ENCODE measurements at regions of chr17 and their contacts with region 1.

Region 1: DNA sequence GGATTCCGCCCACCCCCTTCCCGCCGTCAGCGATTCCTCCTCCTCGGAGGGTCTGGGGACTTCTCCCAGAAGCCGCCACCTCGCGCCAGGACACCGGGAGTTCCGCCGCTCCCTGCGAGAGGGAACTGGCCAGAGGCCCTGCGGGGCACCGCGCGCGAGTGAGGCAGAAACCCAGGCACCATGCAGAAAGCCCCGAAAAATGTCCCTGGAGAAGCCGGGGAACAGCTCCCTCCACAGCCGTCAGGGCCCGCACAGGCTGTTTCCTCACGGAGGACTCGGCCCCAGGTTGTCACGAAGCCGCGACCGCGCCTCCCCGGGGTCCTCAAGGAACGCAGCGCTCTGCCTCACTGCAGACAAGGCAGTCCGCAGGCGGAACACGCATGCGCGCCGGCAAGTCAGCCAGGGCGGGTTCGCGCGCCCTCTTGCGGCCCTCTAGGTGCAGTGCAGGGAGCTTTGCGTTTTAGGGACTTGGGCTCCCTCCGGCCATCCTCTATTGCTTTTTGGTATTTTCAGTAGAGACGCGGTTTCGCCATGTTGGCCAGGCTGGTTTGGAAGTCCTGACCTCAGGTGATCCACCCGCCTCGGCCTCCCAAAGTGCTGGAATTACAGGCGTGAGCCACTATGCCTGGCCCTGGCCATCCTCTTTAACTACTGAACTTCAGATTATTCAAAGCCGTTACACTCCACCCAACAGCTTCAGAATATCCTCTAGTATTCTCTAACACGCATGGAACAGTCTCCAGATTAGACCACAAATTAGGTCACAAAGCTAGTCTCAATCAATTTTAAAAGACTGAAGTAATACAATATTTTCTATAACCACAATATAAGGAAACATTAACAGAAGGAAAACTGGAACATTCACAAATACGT is 20.3 kb upstream of the ZNF287 start:
- DNase-seq: peak; percentile 75
- H3K4me3 ChIP-seq: peak overlapping the region; percentile 55 to 85 (median 66)
- H3K27ac ChIP-seq: no peak overlapping the region
- H3K4me1 ChIP-seq: peaks cover 7% of the 10 kb centered on the region
- H3K27me3 ChIP-seq: no peaks in the 10 kb centered on the region
- CTCF ChIP-seq: peak; percentile 93 to 97

Region 2: GRCh38 chr17:16363749-16364536 is 225.4 kb before region 1 on chr17:
- CTCF ChIA-PET with region 1: no interaction called
- dilution Hi-C with region 1: no loop called
- in situ Hi-C with region 1: no loop called
- intact Hi-C with region 1: loop called (anchors 10 kb)
- DNase-seq: peak; percentile 55
- H3K4me3 ChIP-seq: no peak overlapping the region
- H3K27ac ChIP-seq: no peak overlapping the region
- H3K4me1 ChIP-seq: no peaks in the 10 kb centered on the region
- H3K27me3 ChIP-seq: no peaks in the 10 kb centered on the region
- CTCF ChIP-seq: peak; percentile 93 to 98

Region 3: GRCh38 chr17:16456742-16457316 is 132.5 kb before region 1 on chr17:
- CTCF ChIA-PET with region 1: no interaction called
- dilution Hi-C with region 1: no loop called
- in situ Hi-C with region 1: no loop called
- intact Hi-C with region 1: loop called (anchors 1 kb)
- DNase-seq: no peak
- H3K4me3 ChIP-seq: no peak overlapping the region
- H3K27ac ChIP-seq: no peak overlapping the region
- H3K4me1 ChIP-seq: peaks cover 11% of the 10 kb centered on the region
- H3K27me3 ChIP-seq: no peaks in the 10 kb centered on the region
- CTCF ChIP-seq: no peak

Region 4: DNA sequence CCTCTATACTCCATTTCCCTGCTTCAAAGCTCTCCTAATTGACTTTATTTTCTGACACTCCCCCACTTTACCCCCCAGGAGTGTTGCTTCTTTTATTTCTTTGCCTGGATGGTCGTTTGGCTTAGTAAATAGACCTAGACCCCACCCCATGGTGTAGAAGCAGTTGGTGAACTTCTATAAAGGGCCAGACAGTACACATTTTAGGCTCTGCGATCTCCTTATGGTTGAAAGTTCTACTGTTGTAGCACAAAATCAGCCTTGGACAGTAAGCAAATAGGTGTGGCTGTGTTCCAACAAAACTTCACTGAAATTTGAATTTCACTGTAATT is 52.2 kb before region 1 on chr17:
- CTCF ChIA-PET with region 1: no interaction called
- dilution Hi-C with region 1: no loop called
- in situ Hi-C with region 1: no loop called
- intact Hi-C with region 1: loop called (anchors 1 kb)
- DNase-seq: no peak
- H3K4me3 ChIP-seq: no peak overlapping the region
- H3K27ac ChIP-seq: no peak overlapping the region
- H3K4me1 ChIP-seq: no peaks in the 10 kb centered on the region
- H3K27me3 ChIP-seq: no peaks in the 10 kb centered on the region
- CTCF ChIP-seq: no peak

Region 5: DNA sequence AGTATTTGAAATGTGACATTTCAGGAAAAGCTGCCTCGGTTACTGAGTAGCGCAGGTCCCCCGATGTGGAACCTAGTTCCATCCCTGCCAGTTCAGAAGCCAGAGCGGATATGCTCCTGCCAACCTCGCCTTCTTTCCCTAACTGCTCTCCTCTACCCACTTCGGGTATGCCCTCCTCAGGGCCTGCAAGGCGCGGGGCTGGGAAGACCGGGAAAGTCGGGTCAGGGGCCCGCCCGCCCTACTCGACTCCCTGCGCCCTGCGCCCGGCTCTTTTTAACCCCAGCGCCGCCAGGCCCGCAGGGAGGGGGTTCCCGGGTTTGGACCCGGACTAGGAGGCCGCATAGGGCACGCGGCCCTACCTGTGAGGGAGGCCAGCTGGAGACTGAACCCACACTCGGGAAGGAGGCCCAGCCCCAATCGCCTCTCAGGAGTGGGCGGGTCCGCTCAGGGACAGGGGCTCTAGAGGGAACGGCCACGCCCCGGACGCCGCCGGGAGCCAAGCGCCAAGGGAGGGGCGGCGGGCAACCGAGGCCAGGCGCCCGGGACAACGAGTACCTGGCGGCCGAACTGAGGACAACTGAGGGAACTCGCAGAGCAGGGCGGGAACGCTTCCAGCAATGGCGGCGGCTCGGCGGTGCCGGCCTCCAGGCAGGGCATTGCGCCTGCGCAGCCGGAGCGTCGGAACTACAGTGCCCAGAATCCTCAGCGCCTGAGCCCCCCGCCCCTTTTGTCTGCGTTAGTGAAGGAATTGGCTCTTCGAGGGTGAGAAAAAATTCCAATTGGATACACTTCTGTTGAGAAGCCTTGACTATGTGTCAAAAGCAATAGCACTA is 64.1 kb after region 1 on chr17 and contains the start of gene ZNF624:
- CTCF ChIA-PET with region 1: no interaction called
- dilution Hi-C with region 1: no loop called
- in situ Hi-C with region 1: no loop called
- intact Hi-C with region 1: no loop called
- DNase-seq: peak; percentile 90
- H3K4me3 ChIP-seq: peak within 1 kb of the TSS; percentile 63 to 72 (median 63)
- H3K27ac ChIP-seq: peak within 1 kb of the TSS; percentile 61
- H3K4me1 ChIP-seq: peaks cover 12% of the 10 kb centered on the region
- H3K27me3 ChIP-seq: no peaks in the 10 kb centered on the region
- CTCF ChIP-seq: no peak
- total RNA-seq, gene ZNF624: 3.4 to 5.8 TPM

Region 6: GRCh38 chr17:16873174-16874035 is 284.1 kb after region 1 on chr17:
- CTCF ChIA-PET with region 1: no interaction called
- dilution Hi-C with region 1: no loop called
- in situ Hi-C with region 1: loop called in 1 of 2 experiments (anchors 25 kb)
- intact Hi-C with region 1: no loop called
- DNase-seq: peak; percentile 8
- H3K4me3 ChIP-seq: no peak overlapping the region
- H3K27ac ChIP-seq: no peak overlapping the region
- H3K4me1 ChIP-seq: no peaks in the 10 kb centered on the region
- H3K27me3 ChIP-seq: no peaks in the 10 kb centered on the region
- CTCF ChIP-seq: peak; percentile 63 to 74

Region 7: GRCh38 chr17:18107061-18107790 is 1517.9 kb after region 1 on chr17:
- CTCF ChIA-PET with region 1: interaction called, 36 read pairs
- dilution Hi-C with region 1: no loop called
- in situ Hi-C with region 1: no loop called
- intact Hi-C with region 1: no loop called
- DNase-seq: no peak
- H3K4me3 ChIP-seq: no peak overlapping the region
- H3K27ac ChIP-seq: no peak overlapping the region
- H3K4me1 ChIP-seq: no peaks in the 10 kb centered on the region
- H3K27me3 ChIP-seq: no peaks in the 10 kb centered on the region
- CTCF ChIP-seq: no peak